Activated CD4-positive, alpha-beta memory T cell treated with anti-CD3 and anti-CD28 coated beads, Interleukin-2, amount 10 ng/mL, durations not matched to agents 7 days and 5 days (primary cell): ENCODE measurements at regions of chr16 and their contacts with region 1.

Region 1: GRCh38 chr16:3173892-3174617 is 13.9 kb upstream of the OR1F1 start:
- DNase-seq: no peak
- H3K4me3 Mint-ChIP-seq: peak overlapping the region; percentile 28
- H3K27ac Mint-ChIP-seq: no peak overlapping the region
- H3K4me1 Mint-ChIP-seq: peaks cover 40% of the 10 kb centered on the region
- H3K27me3 Mint-ChIP-seq: peaks cover 72% of the 10 kb centered on the region

Region 2: GRCh38 chr16:3150346-3151218 is 23.5 kb before region 1 on chr16:
- CTCF ChIA-PET with region 1: interaction called, 10 read pairs
- POLR2A ChIA-PET with region 1: interaction called, 5 read pairs
- DNase-seq: peak; percentile 99
- H3K4me3 Mint-ChIP-seq: peak overlapping the region; percentile 81
- H3K27ac Mint-ChIP-seq: peak overlapping the region; percentile 82
- H3K4me1 Mint-ChIP-seq: peaks cover 37% of the 10 kb centered on the region
- H3K27me3 Mint-ChIP-seq: peaks cover 22% of the 10 kb centered on the region

Region 3: GRCh38 chr16:3158471-3159314 is 15.4 kb before region 1 on chr16:
- CTCF ChIA-PET with region 1: interaction called, 5 read pairs
- POLR2A ChIA-PET with region 1: interaction called, 11 read pairs
- DNase-seq: peak; percentile 96
- H3K4me3 Mint-ChIP-seq: peak overlapping the region; percentile 91
- H3K27ac Mint-ChIP-seq: peak overlapping the region; percentile 95
- H3K4me1 Mint-ChIP-seq: peaks cover 44% of the 10 kb centered on the region
- H3K27me3 Mint-ChIP-seq: peaks cover 23% of the 10 kb centered on the region

Region 4: GRCh38 chr16:3188925-3189825 is 15.1 kb after region 1 on chr16:
- CTCF ChIA-PET with region 1: no interaction called
- POLR2A ChIA-PET with region 1: interaction called, 11 read pairs
- DNase-seq: peak; percentile 60
- H3K4me3 Mint-ChIP-seq: peak overlapping the region; percentile 71
- H3K27ac Mint-ChIP-seq: peak overlapping the region; percentile 78
- H3K4me1 Mint-ChIP-seq: peaks cover 50% of the 10 kb centered on the region
- H3K27me3 Mint-ChIP-seq: peaks cover 64% of the 10 kb centered on the region